Left cardiac atrium (tissue), 4 donors: ENCODE measurements at regions of chr17 and their contacts with region 1.

Region 1: DNA sequence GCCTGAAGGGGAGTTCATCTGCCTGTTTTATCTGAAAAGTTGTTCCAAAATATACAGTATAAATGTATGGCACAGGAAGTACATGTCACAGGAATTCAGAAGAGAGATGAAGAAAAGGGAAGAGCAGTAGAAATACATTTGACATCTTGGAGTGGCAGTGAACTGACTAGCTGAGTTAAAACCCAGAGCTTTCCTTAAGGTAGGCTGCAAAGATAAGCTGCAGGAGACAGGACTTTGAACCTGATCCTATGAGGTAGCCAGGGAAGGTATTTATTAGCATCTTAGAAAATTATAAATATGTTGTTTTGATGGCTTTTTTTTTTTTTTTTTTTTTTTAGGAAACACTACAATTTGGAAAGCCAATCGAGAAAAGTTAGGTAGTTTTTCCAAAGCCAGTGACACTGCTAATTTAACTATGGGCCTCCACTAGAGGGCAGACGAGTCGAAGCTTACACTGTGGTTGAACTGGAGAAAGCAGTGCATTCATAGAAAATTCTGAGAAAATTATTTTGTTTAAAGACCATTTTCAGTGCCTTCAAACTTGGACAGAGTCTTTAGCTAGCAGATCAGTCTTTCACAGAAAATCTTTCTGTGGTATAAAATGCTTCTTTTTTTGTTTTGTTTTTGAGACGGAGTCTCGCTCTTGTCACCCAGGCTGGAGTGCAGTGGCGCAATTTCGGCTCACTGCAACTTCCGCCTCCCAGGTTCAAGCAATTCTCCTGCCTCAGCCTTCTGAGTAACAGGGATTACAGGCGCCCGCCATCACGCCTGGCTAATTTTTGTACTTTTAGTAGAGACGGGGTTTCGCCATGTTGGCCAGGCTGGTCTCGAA is 122.3 kb downstream of the SSH2 start:
- DNase-seq: peak; percentile 56
- ATAC-seq: peak; percentile 65 to 75

Region 2: GRCh38 chr17:29931231-29931932 is 123.6 kb after region 1 on chr17:
- intact Hi-C with region 1: loop called (anchors 1 to 5 kb)
- DNase-seq: peak; percentile 68
- ATAC-seq: peak; percentile 73 to 76

Region 3: DNA sequence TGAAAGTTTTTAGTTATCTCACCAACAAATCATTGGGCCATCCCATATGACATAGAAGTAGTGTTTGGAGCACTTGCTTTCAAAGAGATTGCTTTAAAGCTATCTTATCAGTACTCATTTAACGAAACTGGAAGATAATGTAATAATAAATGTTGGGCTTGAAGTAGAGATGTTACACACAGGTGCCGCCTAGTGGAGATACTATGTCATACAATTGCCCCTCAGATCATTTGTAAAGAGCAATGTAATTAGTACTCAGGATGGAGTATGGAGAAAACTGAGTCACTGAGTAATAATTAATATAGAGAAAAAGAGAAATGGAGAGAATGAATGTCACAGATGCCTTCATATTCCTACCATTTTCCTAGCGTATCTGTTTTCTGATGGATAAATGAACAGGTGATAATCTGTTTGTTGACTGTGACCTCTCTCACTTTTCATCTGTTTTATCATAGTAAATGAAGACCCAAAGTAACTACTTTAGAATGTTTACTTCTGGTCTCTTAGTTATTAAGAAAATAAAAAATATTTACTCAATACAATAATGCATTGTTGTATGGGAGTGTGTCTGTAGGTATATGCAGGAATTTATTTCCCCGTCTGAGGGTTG is 214.1 kb after region 1 on chr17:
- intact Hi-C with region 1: loop called in 1 of 2 experiments (anchors 10 kb)
- DNase-seq: peak; percentile 20
- ATAC-seq: no peak

Region 4: GRCh38 chr17:30093463-30094147 is 285.9 kb after region 1 on chr17:
- intact Hi-C with region 1: loop called in 1 of 2 experiments (anchors 10 kb)
- DNase-seq: no peak
- ATAC-seq: peak; percentile 72 to 74